GM13977 (cell line): ENCODE measurements at regions of chr2 and their contacts with region 1.

Region 1: GRCh38 chr2:227766373-227766883 is 20.7 kb downstream of the SCYGR8 start:
- DNase-seq: peak; percentile 82
- CTCF ChIP-seq: peak; percentile 78

Region 2: DNA sequence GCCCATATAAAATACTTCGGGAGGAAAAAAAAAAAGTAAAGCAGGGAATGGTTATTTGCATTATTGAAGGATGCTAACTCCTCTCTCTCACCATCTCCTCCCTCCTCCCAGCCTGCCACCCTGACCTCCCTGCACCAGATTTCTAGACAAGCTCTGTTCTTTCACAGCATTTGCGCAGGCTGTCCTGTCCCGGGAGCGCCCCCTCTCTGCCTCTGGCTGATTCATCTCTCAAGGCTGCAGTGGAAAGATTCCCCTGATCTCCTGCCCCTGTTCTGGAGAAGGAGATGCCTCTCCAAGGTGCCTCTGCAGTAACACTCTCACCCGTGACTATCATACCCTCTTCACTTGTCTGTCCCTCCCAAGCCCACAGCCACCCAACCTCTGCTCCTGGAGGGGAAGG is 640.9 kb before region 1 on chr2:
- in situ Hi-C with region 1: loop called (anchors 25 kb)
- DNase-seq: no peak
- CTCF ChIP-seq: peak; percentile 16

Region 3: DNA sequence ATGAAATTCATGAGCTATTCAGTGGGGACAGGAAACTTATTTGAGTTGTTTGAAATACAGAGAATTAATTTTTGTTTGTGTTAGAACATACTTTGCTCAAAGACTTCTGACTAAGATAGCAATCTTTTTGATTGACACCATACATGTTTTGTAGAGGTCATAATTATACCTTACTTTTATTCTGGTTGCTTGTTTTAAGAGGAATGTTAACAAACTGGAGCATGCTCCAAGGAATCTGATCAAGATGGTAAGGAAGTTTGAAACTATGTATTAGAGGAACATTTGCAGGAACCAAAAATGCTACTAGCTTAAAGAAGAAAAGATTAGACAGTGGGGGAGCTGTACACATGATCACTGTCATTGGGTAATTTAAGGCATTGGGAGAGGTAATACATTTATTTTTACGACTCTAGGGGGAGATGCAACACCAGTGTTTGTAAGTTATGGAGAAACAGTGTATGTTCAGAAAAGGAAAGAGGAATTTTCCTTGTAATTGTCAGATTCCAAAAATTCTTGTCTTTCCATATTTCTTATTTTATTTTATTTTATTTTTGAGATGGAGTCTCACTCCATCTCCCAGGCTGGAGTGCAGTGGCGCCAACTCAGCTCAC is 286.5 kb before region 1 on chr2:
- in situ Hi-C with region 1: loop called (anchors 25 kb)
- DNase-seq: no peak
- CTCF ChIP-seq: peak; percentile 42